Breast epithelium (tissue), 4 donors: ENCODE measurements at regions of chr2 and their contacts with region 1.

Region 1: GRCh38 chr2:221896505-221897151 is 324.5 kb upstream of the EPHA4 start:
- DNase-seq: peak in 1 of 2 donors; percentile 17
- H3K4me3 ChIP-seq: peak overlapping the region in 1 of 3 donors; percentile 22
- H3K27ac ChIP-seq: peak overlapping the region in 1 of 2 donors; percentile 25
- H3K4me1 ChIP-seq: no peaks in the 10 kb centered on the region
- H3K27me3 ChIP-seq: no peaks in the 10 kb centered on the region
- CTCF ChIP-seq: no peak
- POLR2A ChIP-seq: no peak

Region 2: GRCh38 chr2:221616561-221616960 is 280.1 kb before region 1 on chr2:
- intact Hi-C with region 1: loop called (anchors 5 kb)
- DNase-seq: no peak
- H3K4me3 ChIP-seq: no peak overlapping the region
- H3K27ac ChIP-seq: no peak overlapping the region
- H3K4me1 ChIP-seq: no peaks in the 10 kb centered on the region
- H3K27me3 ChIP-seq: no peaks in the 10 kb centered on the region
- CTCF ChIP-seq: no peak
- POLR2A ChIP-seq: no peak

Region 3: GRCh38 chr2:221792971-221793521 is 103.6 kb before region 1 on chr2:
- intact Hi-C with region 1: no loop called
- DNase-seq: no peak
- H3K4me3 ChIP-seq: no peak overlapping the region
- H3K27ac ChIP-seq: no peak overlapping the region
- H3K4me1 ChIP-seq: no peaks in the 10 kb centered on the region
- H3K27me3 ChIP-seq: no peaks in the 10 kb centered on the region
- CTCF ChIP-seq: no peak
- POLR2A ChIP-seq: no peak